Activated CD4-positive, alpha-beta T cell treated with anti-CD3 and anti-CD28 coated beads for 36 hours (primary cell): ENCODE measurements at regions of chr3 and their contacts with region 1.

Region 1: GRCh38 chr3:183148056-183148455 is 14.5 kb downstream of the LAMP3 start:
- DNase-seq: no peak
- ATAC-seq: no peak
- H3K4me3 Mint-ChIP-seq: no peak overlapping the region
- H3K27ac Mint-ChIP-seq: no peak overlapping the region
- H3K4me1 Mint-ChIP-seq: no peaks in the 10 kb centered on the region
- H3K27me3 Mint-ChIP-seq: no peaks in the 10 kb centered on the region

Region 2: GRCh38 chr3:182479419-182480336 is 668.4 kb before region 1 on chr3:
- CTCF ChIA-PET with region 1: no interaction called
- POLR2A ChIA-PET with region 1: no interaction called
- intact Hi-C with region 1: loop called in 1 of 2 experiments (anchors 10 kb)
- DNase-seq: no peak
- ATAC-seq: no peak
- H3K4me3 Mint-ChIP-seq: no peak overlapping the region
- H3K27ac Mint-ChIP-seq: no peak overlapping the region
- H3K4me1 Mint-ChIP-seq: no peaks in the 10 kb centered on the region
- H3K27me3 Mint-ChIP-seq: peaks cover 2% of the 10 kb centered on the region

Region 3: DNA sequence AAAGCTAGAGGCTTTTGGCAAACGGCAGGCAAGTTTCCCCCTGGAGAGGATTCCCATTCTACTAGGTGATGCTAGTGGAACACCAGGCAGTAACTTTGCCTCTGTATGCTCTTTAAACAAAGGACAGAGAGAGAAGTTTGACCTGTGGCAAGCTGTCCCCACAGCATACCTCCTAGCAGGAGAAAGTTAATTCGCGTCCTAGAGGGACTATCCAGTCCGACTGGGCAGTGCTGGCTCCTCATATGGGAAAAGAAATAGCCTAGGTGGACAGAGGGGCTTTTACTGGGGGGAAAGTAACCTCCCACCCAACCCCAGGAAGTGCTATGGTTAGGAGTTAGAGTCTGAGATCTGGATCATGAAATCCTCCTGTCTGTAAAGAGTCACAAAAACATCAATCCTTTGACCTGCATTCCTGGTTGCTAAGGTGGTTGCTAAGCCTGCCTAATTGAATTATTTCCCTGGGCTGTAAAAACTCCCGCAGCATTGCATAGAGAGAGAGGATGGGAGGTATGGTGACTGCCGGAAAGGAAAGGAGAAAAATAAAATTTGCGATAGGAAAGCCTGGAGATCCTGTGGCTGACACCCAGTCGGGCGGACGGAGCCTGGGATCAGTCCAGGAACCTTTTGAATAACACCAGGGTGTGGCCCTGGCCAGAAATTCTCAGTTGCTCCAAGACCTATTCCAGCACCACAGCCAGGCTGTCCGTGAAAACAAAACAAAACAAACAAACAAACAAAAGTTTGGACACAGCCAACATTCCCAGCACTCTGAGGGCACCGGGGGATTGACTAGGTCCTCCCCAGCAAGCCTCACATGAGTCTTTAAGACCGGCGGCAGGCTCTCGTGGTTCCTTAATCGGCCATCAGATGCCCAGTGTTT is 422.4 kb before region 1 on chr3:
- CTCF ChIA-PET with region 1: no interaction called
- POLR2A ChIA-PET with region 1: no interaction called
- intact Hi-C with region 1: no loop called
- DNase-seq: no peak
- ATAC-seq: no peak
- H3K4me3 Mint-ChIP-seq: no peak overlapping the region
- H3K27ac Mint-ChIP-seq: no peak overlapping the region
- H3K4me1 Mint-ChIP-seq: no peaks in the 10 kb centered on the region
- H3K27me3 Mint-ChIP-seq: peaks cover 4% of the 10 kb centered on the region